ENCODE measurements at regions of chr22 and their contacts with region 1.

Region 1: GRCh38 chr22:43273902-43274484 is 69.2 kb downstream of the SCUBE1 start:
- DNase-seq: peak; percentile 70
- ATAC-seq: peak; percentile 60
- H3K4me3 Mint-ChIP-seq: no peak overlapping the region
- H3K27ac Mint-ChIP-seq: no peak overlapping the region
- H3K4me1 Mint-ChIP-seq: peaks cover 51% of the 10 kb centered on the region
- H3K27me3 Mint-ChIP-seq: no peaks in the 10 kb centered on the region
- CTCF ChIP-seq: peak; percentile 61; the same call in 1 of the 2 replicates

Region 2: GRCh38 chr22:43110444-43110926 is 163.5 kb before region 1 on chr22 and contains the start of gene BIK:
- CTCF ChIA-PET with region 1: no interaction called
- POLR2A ChIA-PET with region 1: no interaction called
- DNase-seq: peak; percentile 74
- ATAC-seq: peak; percentile 46
- H3K4me3 Mint-ChIP-seq: peak within 1 kb of the TSS; percentile 71
- H3K27ac Mint-ChIP-seq: no peak within 1 kb of the TSS
- H3K4me1 Mint-ChIP-seq: peaks cover 10% of the 10 kb centered on the region; the same call in 1 of the 2 replicates
- H3K27me3 Mint-ChIP-seq: peaks cover 76% of the 10 kb centered on the region
- CTCF ChIP-seq: no peak
- total RNA-seq, gene BIK: 3.0 to 3.9 TPM (median 3.2 TPM) in 3 replicates

Region 3: DNA sequence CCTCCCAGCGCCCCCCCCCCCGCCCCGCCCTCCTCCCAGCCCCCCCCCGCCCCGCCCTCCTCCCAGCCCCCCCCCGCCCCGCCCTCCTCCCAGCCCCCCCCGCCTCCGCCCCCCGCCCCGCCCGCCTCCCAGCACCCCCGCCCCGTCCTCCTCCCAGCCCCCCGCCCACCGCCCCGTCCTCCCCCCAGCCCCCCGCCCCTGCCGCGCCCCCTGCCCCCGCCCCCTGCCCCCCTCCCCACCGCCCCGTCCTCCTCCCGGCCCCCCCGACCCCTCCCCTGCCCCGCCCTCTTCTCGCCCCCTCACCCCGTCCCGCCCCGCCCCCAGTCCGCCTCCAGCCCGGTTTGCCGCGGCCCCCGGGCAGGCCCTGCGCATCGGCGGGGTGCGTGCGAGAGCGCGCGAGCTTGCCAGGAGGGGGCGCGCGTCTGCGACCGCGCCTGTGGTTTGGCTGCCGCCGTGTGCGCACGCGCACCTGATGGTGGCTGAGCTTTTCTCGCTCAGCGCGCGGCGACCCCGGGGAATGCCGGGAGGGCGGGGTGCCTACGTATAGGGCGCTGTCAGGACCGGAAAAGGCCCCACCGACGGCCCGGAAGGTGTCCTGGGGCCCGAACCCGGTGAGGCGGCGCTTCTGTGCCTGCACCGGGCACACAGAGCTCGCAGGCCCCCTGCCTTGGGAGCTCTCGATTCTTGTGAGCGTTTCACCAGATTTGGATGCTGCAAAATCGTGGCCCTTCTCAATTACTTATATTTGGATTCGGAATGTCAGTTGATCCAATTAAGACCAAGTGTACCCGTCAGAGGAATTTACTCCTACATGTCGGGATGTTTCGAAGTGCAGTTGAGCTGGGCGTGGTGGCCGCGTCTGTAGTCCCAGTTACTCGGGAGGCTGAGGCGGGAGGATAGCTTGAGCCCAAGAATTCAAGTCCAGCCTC is 86.6 kb before region 1 on chr22:
- CTCF ChIA-PET with region 1: interaction called, 12 read pairs
- POLR2A ChIA-PET with region 1: no interaction called
- DNase-seq: peak; percentile 95
- ATAC-seq: peak; percentile 86
- H3K4me3 Mint-ChIP-seq: peak overlapping the region; percentile 65
- H3K27ac Mint-ChIP-seq: peak overlapping the region; percentile 74
- H3K4me1 Mint-ChIP-seq: peaks cover 24% of the 10 kb centered on the region
- H3K27me3 Mint-ChIP-seq: peaks cover 22% of the 10 kb centered on the region
- CTCF ChIP-seq: peak; percentile 69

Region 4: DNA sequence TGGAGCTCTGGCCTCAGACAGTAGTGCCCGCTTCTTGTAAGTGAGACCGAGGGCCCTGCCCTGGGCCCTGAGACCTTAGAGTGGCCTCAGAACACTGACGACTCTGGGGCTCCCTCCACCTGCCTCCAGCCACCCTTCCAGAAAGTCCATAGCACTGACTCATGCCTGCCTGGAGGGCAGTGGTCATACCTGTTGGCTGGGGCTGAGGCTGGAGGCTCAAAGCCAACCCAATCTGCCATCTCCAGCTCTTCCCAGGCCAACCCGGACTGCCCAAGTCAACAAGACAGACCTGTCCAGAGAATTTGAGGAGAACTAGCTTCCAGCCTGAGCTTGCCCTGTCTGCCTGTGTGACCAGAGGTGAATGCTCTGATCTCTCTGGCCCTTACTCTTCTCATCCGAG is 20.2 kb before region 1 on chr22:
- CTCF ChIA-PET with region 1: interaction called, 20 read pairs
- POLR2A ChIA-PET with region 1: no interaction called
- DNase-seq: no peak
- ATAC-seq: no peak
- H3K4me3 Mint-ChIP-seq: no peak overlapping the region
- H3K27ac Mint-ChIP-seq: no peak overlapping the region
- H3K4me1 Mint-ChIP-seq: no peaks in the 10 kb centered on the region
- H3K27me3 Mint-ChIP-seq: no peaks in the 10 kb centered on the region; the same call in 1 of the 2 replicates
- CTCF ChIP-seq: no peak

Region 5: DNA sequence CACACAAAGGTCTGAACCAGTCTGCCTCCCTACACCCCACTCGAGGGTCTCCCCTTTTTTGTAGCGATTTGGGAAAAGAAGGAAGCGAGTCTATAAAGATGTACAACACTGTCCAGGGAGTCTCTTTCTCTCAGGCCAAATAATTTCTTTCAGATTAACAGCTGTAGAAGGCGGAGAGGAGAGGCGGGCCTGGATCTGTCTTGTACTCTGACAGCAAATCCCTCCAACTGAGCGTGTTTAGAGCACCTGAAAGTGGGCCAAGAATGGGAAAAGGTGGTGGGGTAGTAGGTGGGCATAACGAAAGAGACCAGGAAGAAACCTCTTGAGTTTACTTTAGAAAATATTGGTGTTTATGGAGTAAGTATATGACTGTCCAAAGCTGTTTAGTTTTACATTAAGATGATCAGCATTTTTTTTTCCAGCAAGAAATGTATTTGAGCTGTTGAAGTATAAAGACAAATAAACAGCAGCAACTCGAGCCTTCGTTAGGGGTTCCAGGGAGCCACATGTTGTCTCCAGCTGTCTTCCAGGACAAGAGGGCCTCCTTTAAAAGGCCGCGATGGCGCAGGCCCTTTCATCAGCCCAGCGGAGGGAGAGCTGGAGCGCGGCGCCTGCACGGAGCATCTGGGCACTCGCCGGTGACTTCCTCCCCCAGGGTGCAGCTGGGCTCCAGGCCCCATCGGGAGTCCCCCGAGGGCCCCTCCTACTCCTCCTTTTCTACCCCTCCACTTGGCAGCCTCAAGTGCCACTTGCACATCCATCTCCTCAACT is 34.3 kb after region 1 on chr22:
- CTCF ChIA-PET with region 1: interaction called, 25 read pairs
- POLR2A ChIA-PET with region 1: no interaction called
- DNase-seq: no peak
- ATAC-seq: no peak
- H3K4me3 Mint-ChIP-seq: no peak overlapping the region
- H3K27ac Mint-ChIP-seq: no peak overlapping the region
- H3K4me1 Mint-ChIP-seq: no peaks in the 10 kb centered on the region
- H3K27me3 Mint-ChIP-seq: no peaks in the 10 kb centered on the region
- CTCF ChIP-seq: no peak

Region 6: DNA sequence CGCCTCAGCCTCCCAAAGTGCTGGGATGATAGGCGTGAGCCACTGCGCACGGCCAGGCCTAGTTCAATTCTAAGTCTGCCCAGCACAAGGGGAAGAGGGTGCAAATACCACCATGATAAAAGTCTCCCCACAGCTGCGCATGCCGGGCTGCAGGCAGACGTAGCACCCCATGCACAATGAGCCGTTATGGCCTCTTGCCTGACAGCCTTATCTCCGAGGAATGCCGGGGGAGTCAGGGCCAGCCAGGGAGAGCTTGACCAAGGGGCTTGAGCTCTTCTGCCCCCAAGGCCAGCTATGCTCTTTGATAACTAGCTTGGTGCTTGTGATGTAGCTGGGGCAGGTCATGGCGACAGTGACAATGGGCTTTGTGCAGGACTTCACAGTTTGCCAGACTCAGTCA is 82.9 kb after region 1 on chr22:
- CTCF ChIA-PET with region 1: interaction called, 17 read pairs
- POLR2A ChIA-PET with region 1: no interaction called
- DNase-seq: no peak
- ATAC-seq: no peak
- H3K4me3 Mint-ChIP-seq: no peak overlapping the region
- H3K27ac Mint-ChIP-seq: 0 out of 2 replicates have a peak overlapping the region, but pooled peaks have one; percentile 8
- H3K4me1 Mint-ChIP-seq: peaks cover 3% of the 10 kb centered on the region; the same call in 1 of the 2 replicates
- H3K27me3 Mint-ChIP-seq: no peaks in the 10 kb centered on the region; the same call in 1 of the 2 replicates
- CTCF ChIP-seq: no peak

Region 7: DNA sequence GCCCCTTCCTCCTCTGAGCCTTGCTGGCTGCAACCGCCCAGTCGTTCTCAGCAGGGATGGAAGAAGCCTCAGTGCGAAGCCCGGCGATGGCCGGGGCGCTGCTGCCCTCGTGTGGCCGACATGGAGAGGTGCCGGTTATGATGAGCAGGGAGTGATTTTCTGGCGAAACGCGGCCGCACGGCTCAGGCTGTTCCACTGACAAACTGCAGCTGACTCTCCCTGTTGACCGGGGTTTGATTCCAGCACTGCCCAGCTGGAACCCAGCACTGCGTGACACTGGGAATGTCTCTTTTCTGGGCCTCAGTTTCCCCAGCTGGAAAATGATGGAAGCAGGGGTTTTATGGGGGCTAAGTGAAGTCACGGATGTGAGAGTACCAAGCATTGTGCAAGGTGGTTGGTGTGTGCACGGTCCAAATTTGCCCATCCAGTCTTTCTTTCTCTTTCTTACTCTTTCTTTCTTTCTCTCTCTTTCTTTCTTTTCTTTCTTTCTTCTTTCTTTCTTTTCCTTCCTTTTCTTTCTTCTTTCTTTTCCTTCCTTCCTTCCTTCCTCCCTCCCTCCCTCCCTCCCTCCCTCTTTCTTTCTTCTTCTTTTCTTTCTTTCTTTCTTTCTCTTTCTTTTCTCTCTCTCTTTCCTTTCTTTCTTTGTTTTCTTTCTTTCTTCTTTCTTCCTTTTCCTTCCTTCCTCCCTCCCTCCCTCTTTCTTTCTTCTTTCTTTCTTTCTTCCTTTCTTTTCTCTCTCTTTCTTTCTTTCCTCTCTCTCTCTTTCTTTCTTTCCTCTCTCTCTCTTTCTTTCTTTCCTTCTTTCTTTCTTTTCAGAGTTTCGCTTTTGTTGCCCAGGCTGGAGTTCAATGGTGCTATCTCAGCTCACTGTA is 112.0 kb after region 1 on chr22:
- CTCF ChIA-PET with region 1: interaction called, 108 read pairs
- POLR2A ChIA-PET with region 1: interaction called, 3 read pairs
- DNase-seq: peak; percentile 84
- ATAC-seq: peak; percentile 73
- H3K4me3 Mint-ChIP-seq: no peak overlapping the region
- H3K27ac Mint-ChIP-seq: no peak overlapping the region
- H3K4me1 Mint-ChIP-seq: peaks cover 14% of the 10 kb centered on the region
- H3K27me3 Mint-ChIP-seq: peaks cover 28% of the 10 kb centered on the region
- CTCF ChIP-seq: peak; percentile 86